Right ventricle myocardium inferior (tissue), 1 donor: ENCODE measurements at regions of chr1 and their contacts with region 1.

Region 1: DNA sequence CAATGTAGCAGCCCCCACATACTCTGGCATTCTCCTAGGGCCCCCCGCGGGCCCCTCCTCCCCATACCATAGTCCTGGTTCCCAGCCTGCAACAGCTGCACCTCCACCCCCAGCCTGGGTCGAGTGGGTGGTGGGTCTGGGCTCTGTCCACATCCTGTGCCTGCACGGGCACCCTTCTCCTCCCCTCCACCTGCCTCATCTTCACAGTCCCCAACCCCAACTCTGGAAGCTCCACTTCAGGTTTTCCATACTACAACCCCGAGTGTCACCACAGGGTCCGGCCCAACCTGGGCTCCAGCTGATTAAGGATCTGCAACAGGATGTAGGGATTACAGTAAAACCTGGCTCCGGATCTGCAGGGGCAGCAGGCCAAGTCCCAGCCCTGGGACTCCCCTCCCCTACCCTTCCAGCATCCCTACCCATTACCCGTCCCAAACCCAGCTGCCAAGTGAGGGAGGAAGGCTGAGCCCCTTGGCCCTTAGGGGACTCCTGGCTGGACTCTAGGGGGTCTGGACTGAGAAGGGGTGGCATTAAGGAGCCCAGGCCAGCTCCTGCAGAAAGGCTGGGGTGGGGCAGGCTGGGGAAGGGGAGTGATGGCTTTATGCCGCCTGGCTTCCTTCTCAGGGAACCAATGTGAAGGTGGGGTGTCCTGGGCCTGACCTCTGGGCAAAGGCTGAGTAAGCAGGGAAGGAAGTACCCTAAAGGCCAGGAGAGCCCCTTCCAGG is 116.8 kb downstream of the CASZ1 start:
- DNase-seq: no peak
- ATAC-seq: no peak

Region 2: DNA sequence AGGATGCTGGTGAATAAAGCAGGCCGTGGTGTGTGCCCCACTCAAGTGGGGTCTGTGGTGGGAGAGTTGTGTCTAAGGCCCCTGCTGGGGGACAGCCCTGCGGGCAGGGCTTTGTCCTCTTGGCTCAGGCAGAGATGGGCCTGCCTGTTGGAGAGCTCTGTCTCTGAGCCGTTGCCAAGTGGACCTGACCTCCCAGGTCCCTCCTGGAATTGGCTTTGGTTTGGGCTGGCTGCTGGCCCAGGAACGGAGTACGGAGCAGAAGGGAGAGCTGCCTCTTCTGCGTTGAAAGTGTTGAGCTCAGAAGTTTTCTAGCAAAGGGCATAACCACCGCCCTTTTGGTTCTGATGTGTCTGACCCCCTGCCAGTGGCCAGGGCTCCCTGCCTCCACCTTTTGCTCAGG is 51.0 kb before region 1 on chr1:
- intact Hi-C with region 1: no loop called
- DNase-seq: peak; percentile 77
- ATAC-seq: peak; percentile 74

Region 3: DNA sequence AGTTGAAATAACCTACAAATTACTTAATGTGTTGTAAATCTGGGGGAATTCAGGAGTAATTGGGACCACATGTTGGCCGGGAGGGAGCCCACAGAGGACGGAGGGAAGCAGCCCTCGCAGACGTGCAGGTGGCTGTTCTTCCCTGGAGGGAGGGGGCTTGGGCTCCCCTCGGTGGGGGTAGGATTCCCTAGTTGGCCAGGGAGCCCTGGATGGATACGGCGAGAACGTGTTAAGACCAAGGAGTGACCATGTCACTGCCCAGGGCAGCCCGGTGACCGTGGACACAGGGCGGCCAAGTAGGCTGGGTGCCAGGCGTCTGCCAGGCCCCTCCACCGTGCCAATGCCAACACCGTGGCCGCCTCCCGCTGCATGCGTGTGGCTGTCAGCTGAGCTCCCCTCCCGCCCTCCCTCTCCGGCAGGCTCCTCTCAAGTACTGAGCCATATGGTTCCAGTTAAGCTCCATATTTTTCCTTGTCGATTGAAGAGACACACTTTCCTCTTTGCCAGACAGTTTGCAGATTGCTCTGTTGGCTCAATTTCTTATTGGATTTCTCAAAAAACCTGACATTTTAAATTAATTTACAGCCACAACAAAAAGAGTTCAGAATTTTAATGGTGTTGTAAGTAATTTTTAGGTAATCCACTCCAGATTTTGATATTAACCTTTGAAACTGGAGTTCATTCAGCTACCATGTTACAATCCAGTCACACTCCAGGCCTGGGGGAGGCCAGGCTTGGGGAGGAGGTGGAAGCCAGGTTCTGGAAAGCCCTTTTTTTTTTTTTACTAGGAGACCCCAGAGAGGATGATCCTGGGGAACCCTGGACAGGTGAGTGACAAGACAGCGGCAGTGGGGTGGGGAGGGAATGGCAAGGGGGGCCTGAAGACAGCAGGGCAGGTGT is 45.5 kb after region 1 on chr1:
- intact Hi-C with region 1: loop called (anchors 5 kb)
- DNase-seq: peak; percentile 74
- ATAC-seq: peak; percentile 21